Activated T-helper 2 cell treated with anti-CD3 and anti-CD28 coated beads, Interferon-gamma antibody, Interleukin-2, Interleukin-4, amounts not matched to agents 10 μg/mL and 5 μg/mL and 100 μg/mL, durations not matched to agents 14 hours and 24 hours and 36 hours (primary cell): ENCODE measurements at regions of chr1 and their contacts with region 1.

Region 1: GRCh38 chr1:192936313-192937018 is 122.7 kb downstream of the UCHL5 start:
- DNase-seq: no peak
- H3K4me3 Mint-ChIP-seq: no peak overlapping the region
- H3K27ac Mint-ChIP-seq: peak overlapping the region; percentile 53
- H3K4me1 Mint-ChIP-seq: peaks cover 22% of the 10 kb centered on the region
- H3K27me3 Mint-ChIP-seq: no peaks in the 10 kb centered on the region

Region 2: GRCh38 chr1:192903142-192903541 is 33.3 kb before region 1 on chr1:
- intact Hi-C with region 1: no loop called
- DNase-seq: no peak
- H3K4me3 Mint-ChIP-seq: no peak overlapping the region
- H3K27ac Mint-ChIP-seq: no peak overlapping the region
- H3K4me1 Mint-ChIP-seq: peaks cover 6% of the 10 kb centered on the region
- H3K27me3 Mint-ChIP-seq: no peaks in the 10 kb centered on the region

Region 3: DNA sequence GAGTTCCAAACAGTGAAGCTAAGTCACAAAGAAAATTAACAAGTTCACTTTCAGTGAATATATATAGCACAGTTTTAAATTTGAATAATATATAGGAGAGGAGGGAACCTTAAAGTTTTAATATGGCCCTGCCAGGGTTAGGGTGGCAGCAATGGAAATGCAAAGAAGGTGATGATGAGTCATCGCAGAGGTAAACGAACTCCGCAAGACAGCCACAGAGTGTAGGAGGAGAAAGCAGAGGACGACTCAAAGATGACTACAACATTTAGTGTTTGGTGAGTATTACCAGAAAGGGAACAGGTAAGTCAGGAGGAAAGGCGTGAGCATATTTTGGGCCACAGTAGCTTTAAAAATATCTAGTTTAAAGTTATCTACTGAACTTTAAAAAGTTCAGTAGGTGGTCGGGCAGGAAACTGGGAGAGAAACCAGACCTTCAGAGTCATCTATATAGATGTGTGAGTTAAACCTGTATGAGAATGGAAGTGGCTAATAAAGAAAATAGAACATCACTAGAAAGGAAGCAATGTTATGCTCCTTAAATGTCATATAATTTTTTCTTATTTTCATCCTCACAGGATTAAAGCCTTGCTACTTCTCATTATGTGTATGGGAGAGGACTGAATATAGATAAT is 47.0 kb after region 1 on chr1:
- intact Hi-C with region 1: loop called (anchors 2 kb)
- DNase-seq: no peak
- H3K4me3 Mint-ChIP-seq: no peak overlapping the region
- H3K27ac Mint-ChIP-seq: peak overlapping the region; percentile 75
- H3K4me1 Mint-ChIP-seq: peaks cover 35% of the 10 kb centered on the region
- H3K27me3 Mint-ChIP-seq: no peaks in the 10 kb centered on the region

Region 4: GRCh38 chr1:193115629-193116227 is 179.3 kb after region 1 on chr1:
- intact Hi-C with region 1: no loop called
- DNase-seq: no peak
- H3K4me3 Mint-ChIP-seq: no peak overlapping the region
- H3K27ac Mint-ChIP-seq: no peak overlapping the region
- H3K4me1 Mint-ChIP-seq: peaks cover 10% of the 10 kb centered on the region
- H3K27me3 Mint-ChIP-seq: peaks cover 12% of the 10 kb centered on the region